Naive thymus-derived CD4-positive, alpha-beta T cell (primary cell): ENCODE measurements at regions of chr22 and their contacts with region 1.

Region 1: DNA sequence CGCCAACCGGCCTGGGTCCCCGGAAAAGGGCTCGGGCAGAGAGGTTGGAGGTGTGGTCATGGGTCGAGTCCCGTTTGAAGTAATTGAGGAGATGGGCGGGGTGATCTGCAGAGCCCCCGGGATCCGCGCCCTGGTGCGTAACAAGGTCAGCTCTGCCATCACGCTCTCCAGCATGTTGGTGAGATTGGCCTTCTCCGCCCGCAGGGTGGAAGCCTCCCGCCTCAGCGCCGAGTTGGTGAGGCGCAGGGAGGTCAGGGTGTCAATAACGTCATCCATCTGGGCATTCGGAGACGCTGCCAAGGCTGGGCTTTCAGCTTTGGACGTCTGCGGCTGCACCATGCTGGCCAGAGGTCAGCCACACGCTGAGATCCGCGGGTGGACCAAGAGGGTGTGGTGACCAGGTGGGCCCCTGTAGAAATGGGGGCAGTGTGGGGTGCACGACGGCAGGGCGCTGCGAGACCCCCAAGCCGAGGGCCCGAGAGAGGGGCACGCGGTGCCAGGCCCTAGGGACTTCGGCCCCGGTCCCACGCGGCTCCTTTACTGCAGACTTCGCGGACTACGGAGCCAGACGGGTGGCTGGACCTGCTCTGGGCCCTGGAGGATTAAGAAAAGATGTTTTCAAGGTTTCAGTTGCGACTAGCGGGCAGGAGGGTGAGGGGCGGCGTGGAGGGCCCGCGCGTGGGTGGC is 672 bp downstream of the RTL6 start:
- DNase-seq: peak in 2 of 9 donors; percentile 8 to 11
- ATAC-seq: no peak
- H3K4me3 ChIP-seq: peak overlapping the region; percentile 61
- H3K4me3 Mint-ChIP-seq: peak overlapping the region; percentile 42 to 89 (median 72)
- H3K27ac ChIP-seq: peak overlapping the region; percentile 80
- H3K27ac Mint-ChIP-seq: peak overlapping the region; percentile 15 to 91 (median 73)
- H3K4me1 ChIP-seq: peaks cover 4 to 28% of the 10 kb centered on the region in 2 donors
- H3K4me1 Mint-ChIP-seq: peaks cover 5 to 47% (median 29%) of the 10 kb centered on the region in 7 donors
- H3K27me3 ChIP-seq: no peaks in the 10 kb centered on the region
- H3K27me3 Mint-ChIP-seq: peaks cover 0 to 9% (median 5%) of the 10 kb centered on the region in 5 donors

Region 2: DNA sequence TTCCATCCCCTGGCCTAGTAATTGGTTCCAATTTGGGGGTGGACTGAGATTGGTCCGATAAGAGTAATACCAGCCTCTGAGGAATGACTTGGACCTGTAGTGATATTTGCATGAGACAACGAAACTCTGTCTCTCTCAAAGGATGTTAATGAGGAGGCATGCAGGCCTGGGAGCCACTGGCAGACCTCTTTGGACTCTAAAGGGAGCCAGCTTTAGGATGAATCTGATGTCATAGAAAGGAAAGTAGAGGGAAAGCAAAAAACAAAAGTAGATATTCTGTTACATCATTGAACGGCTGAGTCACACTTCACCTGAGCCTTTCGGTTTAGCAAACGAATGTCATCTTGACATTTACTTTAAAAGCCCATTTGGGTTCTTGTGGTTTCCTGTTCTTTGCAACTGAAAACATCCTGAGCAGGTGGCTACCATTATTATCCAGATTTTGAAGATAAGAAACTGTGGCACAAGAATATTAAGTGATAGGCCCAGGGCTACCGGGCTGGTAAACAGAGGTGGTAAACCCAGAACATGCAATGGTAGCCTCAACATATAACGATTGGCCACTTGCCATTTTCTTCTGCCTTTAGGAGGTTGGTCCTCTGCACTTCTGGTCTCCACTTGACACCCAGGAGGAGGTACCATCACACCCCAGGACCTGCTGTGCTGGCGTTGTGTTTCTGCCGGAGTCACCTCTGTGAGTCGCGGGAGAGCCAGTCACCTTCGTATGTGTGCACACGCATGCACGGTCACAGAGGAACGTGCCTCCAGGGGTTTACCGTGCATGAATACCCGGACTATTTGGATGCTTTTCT is 42.0 kb before region 1 on chr22:
- CTCF ChIA-PET with region 1: no interaction called
- POLR2A ChIA-PET with region 1: no interaction called
- intact Hi-C with region 1: loop called (anchors 2 kb)
- DNase-seq: peak in 5 of 9 donors; percentile 4 to 45 (median 32)
- ATAC-seq: peak; percentile 73
- H3K4me3 ChIP-seq: peak overlapping the region; percentile 3
- H3K4me3 Mint-ChIP-seq: peak overlapping the region in 6 of 10 donors; percentile 22 to 79 (median 59)
- H3K27ac ChIP-seq: no peak overlapping the region
- H3K27ac Mint-ChIP-seq: peak overlapping the region in 4 of 9 donors; percentile 21 to 91 (median 57)
- H3K4me1 ChIP-seq: peaks cover 9 to 21% of the 10 kb centered on the region in 2 donors
- H3K4me1 Mint-ChIP-seq: peaks cover 16 to 36% (median 18%) of the 10 kb centered on the region in 7 donors
- H3K27me3 ChIP-seq: no peaks in the 10 kb centered on the region
- H3K27me3 Mint-ChIP-seq: no peaks in the 10 kb centered on the region

Region 3: GRCh38 chr22:44664149-44664548 is 166.8 kb after region 1 on chr22:
- CTCF ChIA-PET with region 1: no interaction called
- POLR2A ChIA-PET with region 1: no interaction called
- intact Hi-C with region 1: loop called (anchors 1 to 10 kb)
- DNase-seq: peak in 6 of 9 donors; percentile 27 to 49 (median 34)
- ATAC-seq: peak; percentile 58
- H3K4me3 ChIP-seq: peak overlapping the region; percentile 30
- H3K4me3 Mint-ChIP-seq: peak overlapping the region; percentile 33 to 77 (median 56)
- H3K27ac ChIP-seq: peak overlapping the region; percentile 61
- H3K27ac Mint-ChIP-seq: peak overlapping the region; percentile 68 to 91 (median 83)
- H3K4me1 ChIP-seq: peaks cover 43 to 46% of the 10 kb centered on the region in 2 donors
- H3K4me1 Mint-ChIP-seq: peaks cover 37 to 56% (median 47%) of the 10 kb centered on the region in 7 donors
- H3K27me3 ChIP-seq: no peaks in the 10 kb centered on the region
- H3K27me3 Mint-ChIP-seq: peaks cover 0 to 9% (median 0%) of the 10 kb centered on the region in 5 donors